Activated T-helper 2 cell treated with anti-CD3 and anti-CD28 coated beads, Interferon-gamma antibody, Interleukin-2, Interleukin-4, amounts not matched to agents 10 μg/mL and 5 μg/mL and 100 μg/mL, durations not matched to agents 14 hours and 24 hours and 36 hours (primary cell): ENCODE measurements at regions of chr3 and their contacts with region 1.

Region 1: GRCh38 chr3:131381444-131382291 is at the start of gene NUDT16:
- DNase-seq: peak; percentile 97
- H3K4me3 Mint-ChIP-seq: peak within 1 kb of the TSS; percentile 96
- H3K27ac Mint-ChIP-seq: peak within 1 kb of the TSS; percentile 94
- H3K4me1 Mint-ChIP-seq: peaks cover 41% of the 10 kb centered on the region
- H3K27me3 Mint-ChIP-seq: no peaks in the 10 kb centered on the region
- total RNA-seq, gene NUDT16: 10.2 TPM in 2 replicates

Region 2: DNA sequence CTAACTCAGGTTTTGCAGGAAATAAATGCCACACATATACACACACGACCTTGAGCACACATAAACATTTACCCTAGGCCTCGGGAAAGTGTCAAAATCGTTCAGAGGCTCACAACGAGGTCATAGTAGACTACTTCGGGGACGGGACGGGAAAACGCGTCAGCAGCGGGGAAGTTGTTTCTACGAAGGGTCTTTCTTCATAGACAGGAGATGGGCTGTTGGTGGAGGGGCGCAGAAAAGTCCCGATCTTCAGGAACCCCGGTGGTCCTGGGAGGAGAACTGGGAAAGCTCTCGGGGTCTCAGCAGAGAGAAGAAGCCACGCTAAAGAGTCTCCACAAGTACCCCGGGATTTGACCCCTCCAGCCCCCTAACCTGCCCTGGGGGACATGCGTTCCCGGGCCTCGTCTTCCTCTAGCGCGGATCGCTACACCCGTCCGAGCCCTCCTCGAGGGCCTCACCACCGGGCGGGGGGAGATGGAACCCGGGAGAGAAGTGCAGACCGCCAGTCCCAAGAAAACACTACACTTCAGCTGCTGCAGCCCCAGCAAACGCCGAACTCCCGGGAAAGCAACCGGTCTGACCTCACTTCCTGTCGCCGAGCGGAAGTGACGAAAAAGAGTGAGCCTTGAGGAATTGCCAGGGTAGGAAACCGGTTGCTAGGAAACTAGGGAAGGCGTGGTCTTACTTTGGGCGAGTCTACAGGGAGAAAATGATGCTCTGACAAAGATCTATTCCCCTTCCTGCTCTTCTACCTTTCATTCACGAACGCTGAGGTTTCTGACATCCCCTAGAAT is 635.2 kb before region 1 on chr3 and contains the start of gene PIK3R4:
- intact Hi-C with region 1: loop called (anchors 5 kb)
- DNase-seq: peak; percentile 94
- H3K4me3 Mint-ChIP-seq: peak within 1 kb of the TSS; percentile 84
- H3K27ac Mint-ChIP-seq: peak within 1 kb of the TSS; percentile 93
- H3K4me1 Mint-ChIP-seq: peaks cover 36% of the 10 kb centered on the region
- H3K27me3 Mint-ChIP-seq: no peaks in the 10 kb centered on the region
- total RNA-seq, gene PIK3R4: 33.4 and 34.9 TPM in 2 replicates

Region 3: DNA sequence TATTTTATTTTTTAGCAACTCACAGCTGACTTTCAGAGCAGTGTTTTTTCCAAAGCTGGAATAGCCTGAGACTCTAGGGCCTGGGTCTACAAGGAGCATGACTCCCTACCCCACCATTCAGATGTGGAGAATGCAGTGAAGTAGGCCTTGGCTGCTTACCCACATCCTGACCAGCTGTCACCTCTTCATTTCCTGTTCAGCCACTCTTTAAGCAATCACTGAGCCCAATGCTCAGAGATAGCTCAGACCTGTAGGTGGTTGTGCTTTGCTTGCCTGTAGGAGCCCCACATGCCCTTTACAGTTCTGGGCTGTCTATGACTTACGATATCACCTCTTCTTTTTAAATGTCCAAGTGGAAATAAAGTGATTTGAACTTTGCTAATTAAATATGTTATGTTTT is 206.9 kb before region 1 on chr3:
- intact Hi-C with region 1: loop called (anchors 10 kb)
- DNase-seq: peak; percentile 21
- H3K4me3 Mint-ChIP-seq: no peak overlapping the region
- H3K27ac Mint-ChIP-seq: peak overlapping the region; percentile 22
- H3K4me1 Mint-ChIP-seq: peaks cover 16% of the 10 kb centered on the region
- H3K27me3 Mint-ChIP-seq: no peaks in the 10 kb centered on the region

Region 4: GRCh38 chr3:131349946-131350347 is 31.7 kb before region 1 on chr3:
- intact Hi-C with region 1: no loop called
- DNase-seq: no peak
- H3K4me3 Mint-ChIP-seq: no peak overlapping the region
- H3K27ac Mint-ChIP-seq: no peak overlapping the region
- H3K4me1 Mint-ChIP-seq: peaks cover 5% of the 10 kb centered on the region
- H3K27me3 Mint-ChIP-seq: peaks cover 7% of the 10 kb centered on the region

Region 5: DNA sequence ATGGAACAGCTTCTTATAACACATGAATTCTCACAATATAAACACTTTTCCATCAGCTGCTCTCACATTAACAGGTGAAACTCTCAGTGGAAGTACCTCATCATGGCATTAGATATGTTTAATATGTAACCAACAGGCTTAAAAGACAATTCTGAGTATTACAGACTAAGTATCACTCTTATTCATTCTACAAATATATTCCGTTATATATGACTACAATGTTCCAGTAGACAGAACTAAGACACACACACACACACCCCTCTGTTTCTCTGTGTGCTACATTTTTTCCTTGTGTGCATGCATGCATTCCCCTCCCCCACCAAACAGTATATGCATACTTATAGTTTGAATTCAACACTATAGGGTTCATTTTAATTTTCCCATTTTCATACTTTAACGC is 88.7 kb after region 1 on chr3:
- intact Hi-C with region 1: loop called (anchors 1 kb)
- DNase-seq: no peak
- H3K4me3 Mint-ChIP-seq: no peak overlapping the region
- H3K27ac Mint-ChIP-seq: peak overlapping the region; percentile 73
- H3K4me1 Mint-ChIP-seq: peaks cover 34% of the 10 kb centered on the region
- H3K27me3 Mint-ChIP-seq: no peaks in the 10 kb centered on the region